Psoas muscle (tissue), 8 donors: ENCODE measurements at regions of chr3 and their contacts with region 1.

Region 1: GRCh38 chr3:42839616-42840015 is 30.4 kb downstream of the ACKR2 start:
- DNase-seq: no peak
- ATAC-seq: peak; percentile 81 to 97 (median 92)
- H3K4me3 ChIP-seq: no peak overlapping the region
- H3K27ac ChIP-seq: no peak overlapping the region
- H3K4me1 ChIP-seq: no peaks in the 10 kb centered on the region
- H3K27me3 ChIP-seq: no peaks in the 10 kb centered on the region
- CTCF ChIP-seq: peak; percentile 80

Region 2: DNA sequence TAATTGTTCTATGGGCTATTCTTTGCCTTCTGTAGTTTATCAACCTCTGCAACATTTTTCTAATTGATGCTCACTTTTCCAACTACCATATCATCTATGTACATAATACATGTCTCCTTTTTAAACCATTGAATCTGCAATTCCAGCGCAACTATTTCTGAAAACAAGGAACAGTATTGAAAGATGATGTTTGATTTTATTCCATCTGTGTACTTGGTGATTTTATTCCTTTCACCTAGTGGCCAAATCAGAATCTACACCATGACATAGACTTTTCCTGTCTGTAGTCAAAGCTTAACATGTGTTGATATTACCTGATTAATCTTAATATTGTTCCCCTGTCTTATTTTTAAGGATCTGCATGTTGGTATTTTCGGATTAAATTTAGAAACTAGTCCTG is 226.2 kb before region 1 on chr3:
- intact Hi-C with region 1: no loop called
- DNase-seq: no peak
- ATAC-seq: peak in 2 of 4 donors; percentile 52 to 61
- H3K4me3 ChIP-seq: no peak overlapping the region
- H3K27ac ChIP-seq: peak overlapping the region; percentile 69
- H3K4me1 ChIP-seq: peaks cover 36% of the 10 kb centered on the region
- H3K27me3 ChIP-seq: no peaks in the 10 kb centered on the region
- CTCF ChIP-seq: peak; percentile 41

Region 3: GRCh38 chr3:42780892-42781700 is 58.5 kb before region 1 on chr3:
- intact Hi-C with region 1: loop called (anchors 2 to 5 kb)
- DNase-seq: no peak
- ATAC-seq: peak; percentile 70 to 88 (median 82)
- H3K4me3 ChIP-seq: no peak overlapping the region
- H3K27ac ChIP-seq: no peak overlapping the region
- H3K4me1 ChIP-seq: no peaks in the 10 kb centered on the region
- H3K27me3 ChIP-seq: no peaks in the 10 kb centered on the region
- CTCF ChIP-seq: peak; percentile 82